Astrocyte of the cerebellum (primary cell): ENCODE measurements at regions of chr17 and their contacts with region 1.

Region 1: DNA sequence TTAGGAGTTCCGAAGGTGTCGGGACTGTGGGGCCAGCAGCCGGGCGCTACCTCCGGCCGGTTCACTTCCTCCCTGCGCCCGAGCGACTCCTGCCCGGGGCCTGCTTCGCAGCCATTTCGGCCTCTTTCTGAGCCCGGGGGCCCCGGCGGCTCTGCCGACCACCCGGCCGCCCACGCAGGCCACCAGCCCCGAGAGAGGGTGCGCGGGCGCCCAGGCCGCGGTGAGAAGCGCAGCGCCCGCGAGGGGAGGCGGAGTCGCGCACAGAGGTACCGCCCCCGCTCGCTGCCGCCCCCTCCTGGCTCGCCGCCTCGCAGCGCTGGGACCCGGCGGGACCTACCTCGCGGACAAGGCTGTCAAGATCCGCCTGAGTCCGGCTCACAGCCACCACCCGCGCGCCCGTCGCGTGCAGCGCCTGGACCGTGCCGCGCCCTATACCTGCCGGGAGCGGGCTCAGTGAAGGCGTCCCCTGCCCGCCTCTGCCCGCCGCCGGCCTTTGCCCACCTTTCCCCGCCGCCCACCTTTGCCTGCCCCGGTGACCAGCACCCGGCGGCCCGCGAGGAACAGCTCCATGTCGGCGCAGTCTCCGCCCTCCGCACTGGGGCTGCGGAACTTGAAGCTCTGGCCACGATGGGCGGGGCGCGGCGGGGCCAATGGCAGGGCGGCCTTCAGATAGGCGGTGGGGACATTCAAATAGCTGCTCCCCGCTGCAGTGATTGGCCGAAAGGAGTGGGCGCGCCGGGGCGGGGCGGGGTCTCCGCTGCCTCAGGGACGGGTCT is at the start of gene DCXR:
- DNase-seq: peak; percentile 92
- H3K4me3 ChIP-seq: peak within 1 kb of the TSS; percentile 61
- CTCF ChIP-seq: peak; percentile 68

Region 2: DNA sequence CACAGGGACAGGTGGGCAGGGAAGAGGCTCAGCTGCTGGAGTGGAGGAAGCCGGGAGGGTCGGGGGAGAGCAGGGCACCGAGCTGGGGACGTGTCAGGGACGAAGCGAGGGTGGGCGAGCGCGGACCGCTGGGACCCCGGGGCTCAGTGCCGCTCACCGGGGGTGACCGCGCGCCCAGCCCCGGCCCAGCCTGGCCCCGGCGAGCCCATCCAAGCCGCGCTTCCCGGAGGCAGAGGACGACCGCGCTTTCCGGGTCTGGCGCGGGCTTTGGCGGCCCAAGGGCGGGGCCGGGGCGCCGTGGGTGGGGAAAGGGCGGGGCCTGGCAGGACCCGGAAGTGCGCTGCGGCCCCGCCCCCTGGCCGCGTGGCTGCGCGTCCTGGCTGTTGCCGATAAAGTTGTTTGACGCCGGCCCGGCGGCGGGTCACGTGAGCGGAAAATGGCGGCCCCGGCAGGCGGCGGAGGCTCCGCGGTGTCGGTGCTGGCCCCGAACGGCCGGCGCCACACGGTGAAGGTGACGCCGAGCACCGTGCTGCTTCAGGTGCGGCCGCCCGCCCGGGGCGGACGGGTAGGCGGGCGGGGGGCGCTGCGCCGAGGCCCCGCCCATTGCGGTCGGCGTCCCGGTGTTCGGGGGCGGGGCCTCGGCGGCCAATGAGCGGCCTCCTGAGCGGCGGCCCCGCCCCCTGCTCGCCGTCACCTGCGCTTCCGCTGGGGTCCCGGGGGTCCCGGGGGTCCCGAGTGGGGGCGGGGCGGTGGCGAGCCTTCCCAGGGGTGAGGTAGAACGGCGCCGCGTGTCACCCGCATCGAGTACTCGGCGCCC is 59.9 kb before region 1 on chr17 and contains the start of gene ASPSCR1:
- in situ Hi-C with region 1: loop called (anchors 10 kb)
- DNase-seq: peak; percentile 69
- H3K4me3 ChIP-seq: peak within 1 kb of the TSS; percentile 75
- CTCF ChIP-seq: no peak

Region 3: DNA sequence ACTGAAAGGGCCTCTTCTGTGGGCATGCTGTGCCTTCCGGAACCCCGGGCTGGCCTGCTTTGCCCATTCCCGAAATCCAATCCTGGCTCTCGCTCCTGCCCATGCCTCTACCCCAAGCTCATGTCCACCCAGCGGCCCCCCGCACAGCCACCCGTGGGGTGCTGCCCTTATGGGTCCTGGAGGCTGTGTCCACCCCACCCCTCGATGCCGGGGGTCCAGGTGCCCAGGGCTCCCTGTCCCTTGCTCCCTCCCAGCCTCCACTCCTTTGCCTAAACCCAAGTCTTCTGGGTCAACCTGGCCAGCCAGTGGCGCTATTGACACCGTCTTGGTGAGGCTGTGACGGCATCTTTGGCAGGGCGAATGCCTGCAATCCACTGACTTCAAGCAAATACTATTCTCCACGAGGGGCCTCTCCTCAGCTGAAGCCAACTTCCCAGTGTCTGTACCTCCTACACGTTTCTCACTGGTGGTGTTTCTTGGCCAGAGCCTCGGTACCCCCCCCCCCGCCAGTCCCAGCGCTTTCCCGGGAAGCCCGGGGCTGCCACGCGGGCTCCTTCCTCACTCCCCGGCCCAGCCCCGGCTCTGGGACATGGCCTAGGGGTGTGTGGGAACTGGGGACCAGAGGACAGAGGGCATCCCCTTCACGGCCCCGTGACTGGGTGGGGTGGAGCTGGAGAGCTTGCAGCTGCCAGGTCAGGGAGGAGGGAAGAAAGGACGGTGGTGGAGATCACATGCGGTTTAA is 40.5 kb after region 1 on chr17:
- in situ Hi-C with region 1: no loop called
- DNase-seq: no peak
- H3K4me3 ChIP-seq: no peak overlapping the region
- CTCF ChIP-seq: no peak

Region 4: DNA sequence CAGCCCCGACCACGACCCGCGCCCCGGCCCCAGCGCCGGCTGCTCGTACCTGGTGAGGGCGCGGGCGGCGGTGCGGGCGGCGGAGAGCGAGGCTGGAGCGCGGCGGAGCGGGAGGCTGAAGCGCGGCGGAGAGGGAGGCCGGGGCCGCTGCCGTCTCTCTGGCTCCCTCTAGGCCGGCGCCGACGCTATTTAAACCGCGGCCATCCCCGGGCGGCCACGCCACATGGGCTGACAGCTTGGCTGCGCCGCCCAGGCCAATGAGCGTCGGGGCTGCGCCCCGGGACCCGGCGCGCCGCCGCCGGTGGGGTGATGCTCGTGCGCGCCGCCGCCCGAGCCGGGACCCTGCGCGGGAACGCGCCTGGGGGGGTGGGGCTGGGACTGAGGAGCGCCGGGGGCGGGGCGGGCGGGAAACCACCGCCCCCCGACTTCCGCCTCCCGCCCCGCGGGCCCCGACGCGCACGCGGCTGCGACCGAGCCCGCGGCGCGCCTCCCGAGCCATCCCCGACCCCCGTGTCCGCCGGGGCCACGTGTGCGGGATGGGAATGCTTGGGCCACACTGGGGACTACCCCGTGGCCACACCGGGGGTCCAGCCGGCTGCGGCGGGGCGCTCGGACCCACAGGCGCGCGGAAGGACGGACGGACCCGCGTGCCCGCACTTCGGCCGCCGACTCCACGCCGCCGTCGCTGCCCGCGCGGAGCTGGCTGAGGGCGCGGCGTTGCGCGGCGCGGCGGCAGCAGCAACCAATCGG is 60.9 kb after region 1 on chr17 and contains the start of gene FASN:
- in situ Hi-C with region 1: no loop called
- DNase-seq: peak; percentile 88
- H3K4me3 ChIP-seq: peak within 1 kb of the TSS; percentile 61
- CTCF ChIP-seq: peak; percentile 24

Region 5: DNA sequence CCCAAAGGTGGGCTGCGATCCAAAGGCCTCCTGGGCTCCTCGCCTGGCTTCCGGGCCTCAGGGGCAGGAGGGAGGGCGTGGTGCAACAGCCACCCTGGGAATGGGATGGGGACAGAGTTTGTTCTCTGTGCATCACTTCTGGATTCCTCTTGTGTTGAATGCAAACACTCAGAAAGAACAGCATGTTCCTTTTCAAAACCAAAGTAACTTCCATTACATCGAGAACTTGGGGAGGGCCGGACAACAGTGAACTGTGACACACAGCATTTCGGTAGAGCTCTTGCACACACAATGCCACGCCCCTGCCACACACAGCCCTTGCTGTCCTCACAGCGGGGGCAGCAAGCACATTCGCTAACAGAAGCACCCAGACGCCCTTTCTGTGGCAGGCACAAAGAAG is 96.8 kb after region 1 on chr17:
- in situ Hi-C with region 1: loop called (anchors 10 kb)
- DNase-seq: no peak
- H3K4me3 ChIP-seq: no peak overlapping the region
- CTCF ChIP-seq: no peak